ENCODE measurements at regions of chr1 and their contacts with region 1.

Region 1: GRCh38 chr1:17661546-17662157 is 93.5 kb upstream of the ACTL8 start:
- DNase-seq: no peak
- H3K4me3 ChIP-seq: no peak overlapping the region
- H3K27me3 ChIP-seq: no peaks in the 10 kb centered on the region
- CTCF ChIP-seq: peak; percentile 85

Region 2: GRCh38 chr1:17648457-17649145 is 13.1 kb before region 1 on chr1:
- CTCF ChIA-PET with region 1: interaction called, 35 read pairs
- POLR2A ChIA-PET with region 1: no interaction called
- DNase-seq: no peak
- H3K4me3 ChIP-seq: no peak overlapping the region
- H3K27me3 ChIP-seq: no peaks in the 10 kb centered on the region
- CTCF ChIP-seq: no peak

Region 3: GRCh38 chr1:17687145-17687544 is 25.5 kb after region 1 on chr1:
- CTCF ChIA-PET with region 1: interaction called, 16 read pairs
- POLR2A ChIA-PET with region 1: no interaction called
- DNase-seq: no peak
- H3K4me3 ChIP-seq: no peak overlapping the region
- H3K27me3 ChIP-seq: no peaks in the 10 kb centered on the region
- CTCF ChIP-seq: no peak

Region 4: DNA sequence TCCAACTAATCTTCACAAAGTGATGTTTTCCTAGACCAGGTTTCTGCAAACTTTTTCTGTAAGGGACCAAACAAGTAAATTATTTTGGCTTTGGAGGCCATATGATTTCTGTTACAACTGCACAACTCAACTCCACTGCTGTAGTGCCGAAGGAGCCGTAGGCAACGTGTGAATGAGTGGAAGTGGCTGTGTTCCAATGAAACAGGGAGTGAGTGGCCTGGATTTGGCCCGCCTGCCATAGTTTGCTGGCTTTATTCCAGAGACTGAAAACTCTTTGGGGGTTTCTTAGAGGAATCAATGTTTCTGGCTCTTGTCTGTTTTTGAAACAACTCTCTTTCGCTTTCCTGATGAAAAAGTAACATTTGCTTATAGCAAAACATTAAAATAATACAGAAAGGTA is 80.9 kb after region 1 on chr1:
- CTCF ChIA-PET with region 1: no interaction called
- POLR2A ChIA-PET with region 1: no interaction called
- DNase-seq: no peak
- H3K4me3 ChIP-seq: no peak overlapping the region
- H3K27me3 ChIP-seq: no peaks in the 10 kb centered on the region
- CTCF ChIP-seq: no peak

Region 5: GRCh38 chr1:17826165-17826488 is 164.5 kb after region 1 on chr1:
- CTCF ChIA-PET with region 1: interaction called, 62 read pairs
- POLR2A ChIA-PET with region 1: no interaction called
- DNase-seq: no peak
- H3K4me3 ChIP-seq: no peak overlapping the region
- H3K27me3 ChIP-seq: no peaks in the 10 kb centered on the region
- CTCF ChIP-seq: peak; percentile 88

Region 6: GRCh38 chr1:18091660-18092446 is 430.2 kb after region 1 on chr1:
- CTCF ChIA-PET with region 1: interaction called, 11 read pairs
- POLR2A ChIA-PET with region 1: no interaction called
- DNase-seq: peak; percentile 24
- H3K4me3 ChIP-seq: no peak overlapping the region
- H3K27me3 ChIP-seq: no peaks in the 10 kb centered on the region
- CTCF ChIP-seq: no peak

Region 7: DNA sequence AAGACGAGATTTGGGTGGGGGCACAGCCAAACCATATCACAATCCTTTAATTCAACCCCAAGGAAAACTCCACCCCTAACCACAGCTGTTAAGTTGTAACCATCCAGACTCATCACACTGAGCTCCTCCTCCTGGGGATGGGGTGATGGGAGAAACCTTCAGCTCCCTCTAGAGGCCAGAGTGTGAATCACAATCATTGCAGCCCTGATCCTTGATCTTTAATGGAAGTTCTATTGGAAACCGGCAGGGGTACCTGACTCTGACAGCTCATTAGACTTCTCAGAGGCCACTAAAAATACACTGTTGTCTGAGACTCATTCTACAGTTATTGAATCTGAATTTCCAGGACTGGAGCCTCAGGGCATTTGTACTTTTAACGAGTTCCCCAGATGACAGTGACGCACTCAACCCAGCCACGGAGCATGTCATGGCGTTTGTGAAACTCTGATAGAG is 573.2 kb after region 1 on chr1:
- CTCF ChIA-PET with region 1: no interaction called
- POLR2A ChIA-PET with region 1: no interaction called
- DNase-seq: no peak
- H3K4me3 ChIP-seq: no peak overlapping the region
- H3K27me3 ChIP-seq: no peaks in the 10 kb centered on the region
- CTCF ChIP-seq: peak; percentile 35